ENCODE measurements at regions of chr2 and their contacts with region 1.

Region 1: GRCh38 chr2:74833418-74834233 is at the start of gene HK2:
- DNase-seq: peak; percentile 85
- H3K4me3 Mint-ChIP-seq: peak within 1 kb of the TSS; percentile 96
- H3K27ac Mint-ChIP-seq: peak within 1 kb of the TSS; percentile 96
- H3K4me1 Mint-ChIP-seq: peaks cover 58% of the 10 kb centered on the region
- H3K27me3 Mint-ChIP-seq: peaks cover 3% of the 10 kb centered on the region
- total RNA-seq, gene HK2: 92.2 and 94.5 TPM in 2 replicates

Region 2: DNA sequence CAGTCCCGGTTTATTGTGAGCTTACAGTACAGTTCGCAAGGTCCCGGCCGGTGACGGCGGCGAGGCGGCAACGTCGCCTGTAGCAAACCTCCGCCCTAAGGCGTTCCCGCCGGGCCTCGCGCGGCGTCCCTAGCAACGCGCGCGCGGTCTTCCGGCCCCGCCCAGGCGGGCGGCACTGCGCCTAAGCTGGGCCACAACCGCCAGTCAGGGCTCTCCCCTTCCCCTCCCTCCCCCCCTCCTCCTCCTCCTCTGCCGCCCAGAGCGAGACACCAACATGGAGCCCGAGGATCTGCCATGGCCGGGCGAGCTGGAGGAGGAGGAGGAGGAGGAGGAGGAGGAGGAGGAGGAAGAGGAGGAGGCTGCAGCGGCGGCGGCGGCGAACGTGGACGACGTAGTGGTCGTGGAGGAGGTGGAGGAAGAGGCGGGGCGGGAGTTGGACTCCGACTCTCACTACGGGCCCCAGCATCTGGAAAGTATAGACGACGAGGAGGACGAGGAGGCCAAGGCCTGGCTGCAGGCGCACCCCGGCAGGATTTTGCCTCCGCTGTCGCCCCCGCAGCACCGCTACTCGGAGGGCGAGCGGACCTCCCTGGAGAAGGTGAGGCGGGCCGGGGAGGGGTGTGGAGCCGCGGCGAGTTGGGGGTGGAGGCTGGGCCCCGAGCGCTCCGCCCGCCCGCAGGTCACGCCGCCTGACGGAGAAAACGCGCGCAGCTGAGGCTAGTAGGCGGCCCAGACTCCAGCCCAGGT is 1447.9 kb before region 1 on chr2 and contains the start of gene ALMS1:
- intact Hi-C with region 1: loop called (anchors 5 kb)
- DNase-seq: peak; percentile 88
- H3K4me3 Mint-ChIP-seq: peak within 1 kb of the TSS; percentile 92
- H3K27ac Mint-ChIP-seq: peak within 1 kb of the TSS; percentile 90
- H3K4me1 Mint-ChIP-seq: peaks cover 37% of the 10 kb centered on the region
- H3K27me3 Mint-ChIP-seq: no peaks in the 10 kb centered on the region
- total RNA-seq, gene ALMS1: 18.2 and 19.4 TPM in 2 replicates

Region 3: GRCh38 chr2:74507145-74507925 is 326.3 kb before region 1 on chr2 and contains the start of gene PCGF1:
- intact Hi-C with region 1: loop called (anchors 1 kb)
- DNase-seq: peak; percentile 96
- H3K4me3 Mint-ChIP-seq: peak within 1 kb of the TSS; percentile 96
- H3K27ac Mint-ChIP-seq: peak within 1 kb of the TSS; percentile 99
- H3K4me1 Mint-ChIP-seq: peaks cover 55% of the 10 kb centered on the region
- H3K27me3 Mint-ChIP-seq: peaks cover 24% of the 10 kb centered on the region
- total RNA-seq, gene PCGF1: 41.9 and 45.0 TPM in 2 replicates

Region 4: DNA sequence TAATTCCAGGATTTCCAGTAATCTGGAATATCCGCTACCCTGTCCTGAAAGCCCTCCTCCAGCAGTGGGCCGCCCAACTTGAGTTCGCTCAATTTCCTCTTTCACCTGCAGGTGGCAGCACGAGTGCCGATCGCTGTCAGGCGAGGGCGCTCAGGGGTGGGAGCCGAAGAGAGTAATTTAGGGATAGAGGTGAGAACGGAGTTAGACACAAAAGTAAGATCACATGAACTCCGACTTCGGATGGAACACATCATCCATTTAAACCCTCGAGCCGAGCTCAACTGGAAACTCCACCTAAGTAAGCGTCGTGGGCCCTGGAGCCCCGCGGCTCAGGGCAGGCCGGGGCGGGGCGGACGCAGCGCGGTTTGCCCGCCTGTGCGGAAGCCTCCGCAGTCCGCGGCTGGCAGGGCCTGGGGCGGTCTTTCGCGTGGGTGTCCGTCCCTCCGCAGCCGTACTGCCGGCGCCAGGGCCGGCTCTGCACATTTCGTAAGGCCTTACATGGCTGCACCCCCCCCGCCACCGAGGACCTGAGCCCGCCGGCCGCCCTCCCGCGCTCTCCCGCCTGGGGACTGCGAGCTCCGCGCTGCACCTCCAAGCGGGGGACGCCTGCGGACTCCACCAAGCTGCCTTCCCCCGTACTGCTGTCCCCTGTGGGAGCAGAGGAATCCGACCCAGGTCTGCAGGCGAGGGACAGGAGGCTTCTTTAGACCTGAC is 118.4 kb before region 1 on chr2:
- intact Hi-C with region 1: loop called (anchors 1 kb)
- DNase-seq: peak; percentile 75
- H3K4me3 Mint-ChIP-seq: peak overlapping the region; percentile 83
- H3K27ac Mint-ChIP-seq: no peak overlapping the region
- H3K4me1 Mint-ChIP-seq: peaks cover 9% of the 10 kb centered on the region
- H3K27me3 Mint-ChIP-seq: peaks cover 12% of the 10 kb centered on the region

Region 5: GRCh38 chr2:74876081-74876886 is 42.7 kb after region 1 on chr2:
- intact Hi-C with region 1: loop called (anchors 1 kb)
- DNase-seq: peak; percentile 21
- H3K4me3 Mint-ChIP-seq: no peak overlapping the region
- H3K27ac Mint-ChIP-seq: peak overlapping the region; percentile 40
- H3K4me1 Mint-ChIP-seq: peaks cover 7% of the 10 kb centered on the region
- H3K27me3 Mint-ChIP-seq: no peaks in the 10 kb centered on the region

Region 6: DNA sequence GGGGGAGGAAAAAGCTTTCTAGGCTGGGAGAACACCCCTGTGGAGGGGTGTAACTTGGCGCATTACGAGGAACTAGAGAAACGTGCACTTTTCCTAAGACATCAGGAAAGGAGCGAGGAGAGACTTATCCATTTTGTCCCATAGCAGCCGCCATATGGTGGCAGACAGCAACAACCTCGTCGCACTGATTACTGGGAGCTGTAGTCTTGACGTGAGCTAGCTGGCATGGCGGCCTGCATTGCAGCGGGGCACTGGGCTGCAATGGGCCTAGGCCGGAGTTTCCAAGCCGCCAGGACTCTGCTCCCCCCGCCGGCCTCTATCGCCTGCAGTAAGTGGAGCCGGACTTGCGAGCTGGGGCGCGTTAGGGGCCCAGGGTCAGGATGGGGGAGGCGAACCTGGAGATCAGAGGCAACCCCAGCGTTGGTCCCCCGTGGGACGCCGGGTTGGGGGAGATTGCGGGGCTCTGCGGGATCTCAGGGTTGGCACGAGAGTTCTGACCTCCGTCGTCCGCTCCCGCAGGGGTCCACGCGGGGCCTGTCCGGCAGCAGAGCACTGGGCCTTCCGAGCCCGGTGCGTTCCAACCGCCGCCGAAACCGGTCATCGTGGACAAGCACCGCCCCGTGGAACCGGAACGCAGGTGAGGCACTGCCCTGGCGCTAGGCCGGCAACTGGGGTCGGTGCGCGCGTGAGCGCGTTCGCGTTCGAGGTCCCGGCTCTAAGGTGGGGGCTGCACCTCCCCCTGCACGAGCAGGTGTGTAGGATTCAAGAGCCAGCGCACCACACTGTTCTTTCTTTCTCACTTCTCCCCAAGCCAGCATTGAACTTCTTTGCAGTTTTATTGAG is 813.2 kb after region 1 on chr2 and contains the start of gene MRPL19:
- intact Hi-C with region 1: loop called (anchors 1 kb)
- DNase-seq: peak; percentile 70
- H3K4me3 Mint-ChIP-seq: peak within 1 kb of the TSS; percentile 97
- H3K27ac Mint-ChIP-seq: peak within 1 kb of the TSS; percentile 95
- H3K4me1 Mint-ChIP-seq: peaks cover 35% of the 10 kb centered on the region
- H3K27me3 Mint-ChIP-seq: peaks cover 1% of the 10 kb centered on the region
- total RNA-seq, gene MRPL19: 74.5 and 75.0 TPM in 2 replicates

Measured in activated T-helper 1 cell treated with anti-CD3 and anti-CD28 coated beads, Interleukin-12 subunit alpha, Interleukin-12 subunit beta, Interleukin-2, Interleukin-4 antibody, amounts not matched to agents 30 ng/mL and 10 ng/mL and 1 ng/mL, durations not matched to agents 14 hours and 24 hours and 36 hours (primary cell).